Gastrocnemius medialis (tissue), 4 donors: ENCODE measurements at regions of chr11 and their contacts with region 1.

Region 1: DNA sequence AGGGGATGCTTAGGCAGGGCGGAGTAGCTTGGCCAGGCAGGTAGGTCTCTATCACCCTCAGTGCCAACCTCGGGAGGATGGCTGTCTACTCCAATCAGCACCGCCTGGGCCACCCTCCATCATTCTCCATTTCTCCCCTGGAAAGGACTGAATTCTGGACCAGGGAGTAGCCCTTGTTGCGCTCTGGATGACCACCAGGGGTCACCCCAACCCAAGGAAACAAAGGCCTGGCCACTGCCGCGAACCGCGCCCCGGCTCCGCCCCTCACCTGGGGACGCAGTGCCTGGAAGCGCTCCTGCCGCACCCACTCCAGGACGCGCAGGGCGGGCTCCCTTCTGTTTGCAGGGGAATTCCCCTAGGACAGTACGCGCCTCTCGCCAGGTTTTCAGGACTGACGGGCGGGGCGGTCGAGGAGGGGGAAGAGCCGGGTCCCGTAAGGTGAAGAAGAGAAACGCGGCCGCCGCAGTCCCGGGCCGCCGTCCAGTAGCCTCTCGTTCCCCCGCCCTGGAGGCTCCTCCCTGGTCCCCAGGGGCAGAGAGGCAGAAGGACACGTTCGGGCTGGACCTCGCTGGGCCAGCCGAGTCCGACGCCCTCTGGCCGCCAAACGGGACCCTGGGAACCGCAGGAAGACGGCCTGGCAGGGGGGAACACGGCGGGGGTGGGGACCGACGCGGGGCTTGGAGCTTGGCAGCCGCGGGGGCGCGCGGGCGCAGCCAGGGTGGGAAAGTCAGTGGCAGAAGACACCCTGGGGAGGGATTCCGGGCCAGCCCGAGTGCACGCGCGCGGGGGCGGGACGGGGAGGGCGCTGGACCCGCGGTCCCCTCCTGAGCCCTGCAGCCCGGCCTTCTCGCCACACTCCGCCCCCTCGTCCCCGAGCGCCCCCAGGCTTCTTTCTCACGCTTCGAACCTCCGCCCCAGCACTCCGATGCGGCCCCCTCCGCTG is 7.1 kb downstream of the SCN4B start:
- DNase-seq: peak; percentile 80 to 81
- ATAC-seq: peak; percentile 81 to 87
- H3K4me3 ChIP-seq: peak overlapping the region; percentile 65 to 80 (median 72)
- H3K27ac ChIP-seq: peak overlapping the region; percentile 53 to 86 (median 70)
- H3K4me1 ChIP-seq: peaks cover 12 to 13% of the 10 kb centered on the region in 2 donors
- H3K27me3 ChIP-seq: peaks cover 0 to 3% (median 0%) of the 10 kb centered on the region in 3 donors
- CTCF ChIP-seq: peak; percentile 87 to 96 (median 92)
- POLR2A ChIP-seq: no peak

Region 2: GRCh38 chr11:118042796-118043195 is 102.8 kb before region 1 on chr11:
- in situ Hi-C with region 1: no loop called
- intact Hi-C with region 1: no loop called
- DNase-seq: no peak
- ATAC-seq: no peak
- H3K4me3 ChIP-seq: no peak overlapping the region
- H3K27ac ChIP-seq: no peak overlapping the region
- H3K4me1 ChIP-seq: no peaks in the 10 kb centered on the region
- H3K27me3 ChIP-seq: no peaks in the 10 kb centered on the region
- CTCF ChIP-seq: no peak
- POLR2A ChIP-seq: no peak

Region 3: DNA sequence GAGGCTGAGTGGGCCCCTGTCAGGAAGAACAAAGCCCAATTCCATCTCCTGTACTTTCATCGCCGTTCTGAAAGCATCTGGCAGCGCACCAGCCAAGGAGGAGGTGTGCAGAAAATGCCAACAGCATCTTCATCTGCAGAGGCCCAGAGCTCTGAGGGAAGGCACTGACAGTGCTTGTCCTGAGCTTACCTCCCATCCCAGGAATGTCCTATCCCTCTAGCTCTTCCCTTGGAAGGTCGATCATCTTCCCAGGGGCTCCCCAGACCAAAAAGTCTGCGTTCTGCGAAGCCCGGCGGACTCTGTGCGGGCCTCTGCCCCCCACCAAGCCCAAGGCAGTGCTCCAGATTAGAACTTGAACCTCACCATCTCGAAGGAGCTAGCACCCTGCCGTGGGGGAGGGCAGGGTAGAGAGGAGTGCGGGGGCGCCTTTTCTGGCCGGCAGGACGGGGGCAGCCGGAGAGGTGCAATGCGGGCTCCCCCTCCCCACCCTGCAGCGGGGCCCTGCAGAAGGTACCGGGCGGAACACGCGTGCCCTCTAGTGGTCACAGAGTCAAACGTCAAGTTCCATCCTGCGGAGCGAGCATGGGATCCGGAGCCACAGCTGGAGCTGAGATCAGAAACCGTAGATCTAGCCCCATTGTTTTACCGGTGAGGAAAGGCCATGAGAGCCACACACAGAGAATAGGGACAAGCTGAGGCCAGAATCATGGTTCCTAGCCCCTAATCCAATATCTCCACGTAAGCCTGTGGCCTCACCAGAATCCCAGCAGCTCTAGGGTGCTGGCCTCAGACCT is 25.9 kb after region 1 on chr11:
- in situ Hi-C with region 1: no loop called
- intact Hi-C with region 1: loop called (anchors 1 kb)
- DNase-seq: peak; percentile 39 to 47
- ATAC-seq: peak; percentile 61 to 70
- H3K4me3 ChIP-seq: no peak overlapping the region
- H3K27ac ChIP-seq: peak overlapping the region in 2 of 4 donors; percentile 20 to 24
- H3K4me1 ChIP-seq: peaks cover 24 to 29% of the 10 kb centered on the region in 2 donors
- H3K27me3 ChIP-seq: no peaks in the 10 kb centered on the region
- CTCF ChIP-seq: peak; percentile 84 to 92 (median 89)
- POLR2A ChIP-seq: no peak

Region 4: GRCh38 chr11:118353084-118353710 is 207.6 kb after region 1 on chr11:
- in situ Hi-C with region 1: no loop called
- intact Hi-C with region 1: loop called (anchors 5 kb)
- DNase-seq: no peak
- ATAC-seq: no peak
- H3K4me3 ChIP-seq: no peak overlapping the region
- H3K27ac ChIP-seq: no peak overlapping the region
- H3K4me1 ChIP-seq: no peaks in the 10 kb centered on the region
- H3K27me3 ChIP-seq: peaks cover 0 to 19% (median 9%) of the 10 kb centered on the region in 3 donors
- CTCF ChIP-seq: peak; percentile 11 to 59 (median 27)
- POLR2A ChIP-seq: no peak

Region 5: DNA sequence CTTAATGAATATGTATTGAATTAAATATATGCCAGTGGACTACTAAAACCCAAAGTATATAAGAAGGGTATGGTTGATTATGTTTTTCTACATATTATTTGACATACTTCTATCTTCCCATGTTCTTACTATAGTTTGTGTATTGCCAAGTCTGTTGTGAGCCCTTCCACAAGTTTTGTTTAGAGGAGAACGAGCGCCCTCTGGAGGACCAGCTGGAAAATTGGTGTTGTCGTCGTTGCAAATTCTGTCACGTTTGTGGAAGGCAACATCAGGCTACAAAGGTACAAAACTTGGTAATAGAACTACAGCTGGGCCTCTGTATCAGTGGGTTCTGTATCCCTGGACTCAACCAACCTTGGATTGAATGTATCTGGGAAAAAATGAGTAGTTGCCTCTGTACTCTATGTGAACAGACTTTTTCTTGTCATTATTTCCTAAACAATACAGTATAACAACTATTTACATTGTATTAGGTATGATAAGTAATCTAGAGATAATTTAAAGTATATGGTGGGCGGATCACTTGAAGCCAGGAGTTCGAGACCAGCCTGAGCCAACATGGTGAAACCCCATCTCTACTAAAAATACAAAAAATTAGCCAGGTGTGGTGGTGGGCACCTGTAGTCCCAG is 343.0 kb after region 1 on chr11:
- in situ Hi-C with region 1: loop called in 2 of 4 experiments (anchors 5 to 10 kb)
- intact Hi-C with region 1: loop called (anchors 1 kb)
- DNase-seq: peak; percentile 27 to 43
- ATAC-seq: peak; percentile 65 to 79
- H3K4me3 ChIP-seq: no peak overlapping the region
- H3K27ac ChIP-seq: peak overlapping the region in 1 of 4 donors; percentile 25
- H3K4me1 ChIP-seq: peaks cover 0 to under 1% of the 10 kb centered on the region in 2 donors
- H3K27me3 ChIP-seq: no peaks in the 10 kb centered on the region
- CTCF ChIP-seq: peak; percentile 69 to 81 (median 78)
- POLR2A ChIP-seq: no peak

Region 6: DNA sequence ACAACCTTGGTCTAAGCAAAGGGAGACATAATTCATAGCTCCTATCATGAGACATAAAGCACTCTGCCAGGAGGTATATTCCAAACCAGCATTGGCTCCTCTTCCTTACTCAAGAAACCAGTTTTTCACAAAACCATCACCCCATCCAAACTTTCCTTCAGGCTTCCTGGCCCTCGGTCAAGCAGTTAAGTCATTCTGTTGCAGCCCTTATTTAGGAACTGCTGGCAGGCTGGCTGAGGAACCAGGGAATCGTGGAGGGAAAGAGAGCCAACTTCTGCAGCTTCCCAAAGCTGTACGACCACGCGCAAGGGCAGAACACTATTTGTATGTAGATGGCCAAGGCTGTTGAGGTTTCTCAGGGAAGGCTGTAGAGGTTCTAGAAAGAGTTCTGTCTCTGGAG is 419.5 kb after region 1 on chr11:
- in situ Hi-C with region 1: no loop called
- intact Hi-C with region 1: loop called (anchors 10 kb)
- DNase-seq: no peak
- ATAC-seq: no peak
- H3K4me3 ChIP-seq: peak overlapping the region; percentile 72 to 86 (median 78)
- H3K27ac ChIP-seq: peak overlapping the region; percentile 38 to 85 (median 82)
- H3K4me1 ChIP-seq: peaks cover 7% of the 10 kb centered on the region in 2 donors
- H3K27me3 ChIP-seq: no peaks in the 10 kb centered on the region
- CTCF ChIP-seq: no peak
- POLR2A ChIP-seq: no peak

Region 7: DNA sequence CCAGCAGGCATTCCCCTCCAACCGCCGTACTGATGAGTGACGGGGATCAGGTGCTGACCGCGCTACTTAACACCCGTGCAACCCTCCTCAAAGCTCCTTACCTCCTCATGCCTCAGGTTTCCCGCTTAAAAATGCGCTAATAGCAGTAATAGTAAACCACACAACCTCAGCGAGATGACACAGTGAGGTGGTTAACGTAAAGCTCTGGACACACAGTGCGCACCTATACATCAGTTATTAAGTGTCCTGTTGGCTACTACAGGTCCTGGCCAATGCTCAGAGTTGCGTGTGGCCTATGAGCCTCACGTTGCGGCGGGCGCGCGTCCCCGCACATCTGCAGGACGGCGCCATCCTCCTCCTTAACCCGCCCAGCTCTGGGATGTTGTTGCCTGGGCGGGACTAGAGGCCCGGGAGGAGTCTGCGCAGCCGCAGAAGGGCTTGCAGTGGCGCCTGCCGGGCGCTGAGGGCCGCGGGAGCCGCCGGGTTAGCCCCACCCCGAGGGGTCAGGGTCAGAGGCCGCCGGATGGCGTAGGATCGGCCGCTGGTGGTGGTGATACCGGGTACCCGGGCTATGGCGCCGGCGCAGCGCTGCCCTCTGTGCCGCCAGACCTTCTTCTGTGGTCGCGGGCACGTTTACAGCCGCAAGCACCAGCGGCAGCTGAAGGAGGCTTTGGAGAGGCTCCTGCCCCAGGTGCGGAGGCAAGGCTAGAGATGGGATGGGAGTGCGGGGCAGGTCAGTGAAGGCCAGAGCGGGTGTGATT is 852.3 kb after region 1 on chr11 and contains the start of gene CENATAC:
- in situ Hi-C with region 1: no loop called
- intact Hi-C with region 1: no loop called
- DNase-seq: peak; percentile 92 to 95
- ATAC-seq: peak; percentile 94 to 96
- H3K4me3 ChIP-seq: peak within 1 kb of the TSS; percentile 66 to 88 (median 81)
- H3K27ac ChIP-seq: peak within 1 kb of the TSS; percentile 79 to 96 (median 85)
- H3K4me1 ChIP-seq: peaks cover 24 to 28% of the 10 kb centered on the region in 2 donors
- H3K27me3 ChIP-seq: no peaks in the 10 kb centered on the region
- CTCF ChIP-seq: peak in 1 of 5 experiments; percentile 17
- POLR2A ChIP-seq: peak; percentile 75 to 91
- total RNA-seq, gene CENATAC: 7.4 to 36.4 (median 16.1) TPM